Sciatic nerve (tissue), 2 donors: ENCODE measurements at regions of chr3 and their contacts with region 1.

Region 1: GRCh38 chr3:50627407-50628051 is 10.6 kb downstream of the MAPKAPK3 start:
- DNase-seq: no peak
- ATAC-seq: peak; percentile 21

Region 2: GRCh38 chr3:50568947-50569749 is 58.4 kb before region 1 on chr3 and contains the start of gene HEMK1:
- intact Hi-C with region 1: no loop called
- DNase-seq: peak; percentile 99
- ATAC-seq: peak; percentile 94
- total RNA-seq, gene HEMK1: 21.3 TPM

Region 3: GRCh38 chr3:50652709-50653108 is 25.2 kb after region 1 on chr3:
- intact Hi-C with region 1: no loop called
- DNase-seq: no peak
- ATAC-seq: peak; percentile 27

Region 4: GRCh38 chr3:51384726-51385473 is 757.4 kb after region 1 on chr3 and contains the start of gene MANF:
- intact Hi-C with region 1: loop called (anchors 10 kb)
- DNase-seq: peak; percentile 97
- ATAC-seq: peak; percentile 100
- total RNA-seq, gene MANF: 60.8 TPM